Activated CD4-positive, alpha-beta T cell treated with anti-CD3 and anti-CD28 coated beads, Interleukin-2, amount 10 ng/mL, durations not matched to agents 24 days and 14 days (primary cell): ENCODE measurements at regions of chr10 and their contacts with region 1.

Region 1: DNA sequence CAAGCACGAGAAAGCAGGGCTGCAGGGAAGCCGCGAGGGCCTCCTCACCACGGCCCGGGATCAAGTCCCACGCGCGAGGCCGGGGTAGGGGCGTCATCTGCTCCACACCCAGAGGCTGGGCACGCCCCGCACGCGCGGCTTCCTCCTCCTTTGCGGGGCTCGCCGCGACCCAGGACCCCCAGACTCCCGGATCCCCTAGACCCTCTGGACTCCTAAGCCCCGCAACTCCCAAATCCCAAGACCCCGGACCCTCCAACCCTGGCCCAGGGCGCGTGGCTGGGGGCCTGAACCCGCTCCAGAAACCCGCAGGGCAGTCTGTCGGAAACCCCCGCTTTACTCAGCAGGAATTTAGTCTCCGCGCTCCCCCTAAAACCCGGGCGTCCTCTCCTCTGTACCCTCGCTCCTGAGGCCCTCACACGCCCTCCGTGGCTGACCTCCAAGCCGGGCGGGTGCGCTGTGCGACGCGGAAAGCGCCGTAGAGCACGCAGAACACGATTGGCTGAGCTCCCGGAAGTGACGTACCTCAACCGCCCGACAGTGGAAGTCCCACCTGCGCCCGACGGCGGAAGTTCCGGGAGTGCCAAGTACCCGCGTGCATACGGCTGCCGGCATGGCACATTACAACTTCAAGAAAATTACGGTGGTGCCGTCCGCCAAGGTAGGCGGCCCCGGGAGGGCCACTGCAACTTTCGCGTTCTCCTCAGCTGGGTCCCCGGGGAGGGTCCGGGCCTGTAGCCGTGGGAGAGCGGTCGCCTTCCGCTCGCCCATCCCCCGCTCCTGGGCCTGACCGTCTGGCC is at the start of gene GTPBP4:
- DNase-seq: peak; percentile 99
- H3K4me3 Mint-ChIP-seq: peak within 1 kb of the TSS; percentile 97
- H3K27ac Mint-ChIP-seq: peak within 1 kb of the TSS; percentile 98
- H3K4me1 Mint-ChIP-seq: peaks cover 34% of the 10 kb centered on the region
- H3K27me3 Mint-ChIP-seq: no peaks in the 10 kb centered on the region
- total RNA-seq, gene GTPBP4: 187 and 194 TPM in 2 replicates

Region 2: DNA sequence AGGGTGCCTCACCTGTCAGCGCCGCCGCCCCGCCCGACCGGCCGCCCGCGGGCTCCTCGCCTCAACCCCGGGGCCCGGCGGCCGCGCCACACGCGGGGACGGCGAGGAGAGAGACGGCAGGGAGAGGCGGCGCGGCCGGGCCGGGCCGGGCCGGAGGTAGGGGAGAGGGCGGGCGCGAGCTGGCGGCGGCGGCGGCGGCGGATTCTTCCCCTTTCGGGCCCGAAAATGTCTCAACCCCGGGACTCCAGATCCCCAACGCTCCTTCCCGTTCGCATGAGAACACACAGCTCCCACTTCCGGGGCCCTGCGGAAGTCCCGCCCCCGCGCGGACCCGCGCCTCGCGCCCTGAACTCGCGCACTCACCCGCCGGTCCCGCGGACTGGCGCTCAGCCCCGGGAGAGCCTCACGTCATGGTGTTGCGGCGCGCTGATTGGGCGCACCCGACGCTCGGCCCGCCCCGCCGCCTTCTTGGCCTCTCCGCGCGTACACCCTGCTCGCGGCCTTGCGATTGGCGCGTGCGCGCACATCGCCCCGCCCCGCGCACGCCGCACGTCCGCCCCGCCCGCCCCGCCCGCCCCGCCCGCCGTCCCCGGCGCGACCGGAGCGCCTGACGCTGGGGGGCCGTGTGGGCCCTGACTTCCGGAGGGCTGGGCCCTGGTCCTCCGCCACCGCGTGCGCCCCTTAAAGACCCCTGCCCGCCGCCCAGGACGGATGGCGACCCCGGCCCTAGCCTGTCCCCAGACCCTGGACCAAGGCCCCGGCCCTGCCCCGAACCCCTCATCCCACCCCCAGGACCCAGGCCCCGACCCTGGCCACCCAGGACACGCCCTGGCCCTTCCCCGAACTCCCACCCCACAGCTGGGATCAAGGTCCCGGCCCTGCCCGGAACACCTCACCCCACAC is 56.4 kb before region 1 on chr10 and contains the start of gene LARP4B:
- intact Hi-C with region 1: loop called (anchors 1 kb)
- DNase-seq: peak; percentile 100
- H3K4me3 Mint-ChIP-seq: peak within 1 kb of the TSS; percentile 92
- H3K27ac Mint-ChIP-seq: peak within 1 kb of the TSS; percentile 96
- H3K4me1 Mint-ChIP-seq: peaks cover 30% of the 10 kb centered on the region
- H3K27me3 Mint-ChIP-seq: no peaks in the 10 kb centered on the region
- total RNA-seq, gene LARP4B: 167 and 169 TPM in 2 replicates

Region 3: GRCh38 chr10:944034-944831 is 43.8 kb before region 1 on chr10:
- intact Hi-C with region 1: loop called (anchors 1 kb)
- DNase-seq: peak; percentile 78
- H3K4me3 Mint-ChIP-seq: peak overlapping the region; percentile 50
- H3K27ac Mint-ChIP-seq: peak overlapping the region; percentile 64
- H3K4me1 Mint-ChIP-seq: peaks cover 26% of the 10 kb centered on the region
- H3K27me3 Mint-ChIP-seq: no peaks in the 10 kb centered on the region

Region 4: GRCh38 chr10:955127-955819 is 32.8 kb before region 1 on chr10:
- intact Hi-C with region 1: no loop called
- DNase-seq: no peak
- H3K4me3 Mint-ChIP-seq: no peak overlapping the region
- H3K27ac Mint-ChIP-seq: no peak overlapping the region
- H3K4me1 Mint-ChIP-seq: no peaks in the 10 kb centered on the region
- H3K27me3 Mint-ChIP-seq: peaks cover 8% of the 10 kb centered on the region

Region 5: GRCh38 chr10:1010703-1011102 is 22.6 kb after region 1 on chr10:
- intact Hi-C with region 1: loop called (anchors 1 kb)
- DNase-seq: no peak
- H3K4me3 Mint-ChIP-seq: peak overlapping the region; percentile 51
- H3K27ac Mint-ChIP-seq: peak overlapping the region; percentile 97
- H3K4me1 Mint-ChIP-seq: peaks cover 21% of the 10 kb centered on the region
- H3K27me3 Mint-ChIP-seq: no peaks in the 10 kb centered on the region

Region 6: GRCh38 chr10:1048732-1049424 is 60.8 kb after region 1 on chr10 and contains the start of gene IDI1:
- intact Hi-C with region 1: loop called (anchors 1 kb)
- DNase-seq: peak; percentile 99
- H3K4me3 Mint-ChIP-seq: peak within 1 kb of the TSS; percentile 95
- H3K27ac Mint-ChIP-seq: peak within 1 kb of the TSS; percentile 95
- H3K4me1 Mint-ChIP-seq: peaks cover 55% of the 10 kb centered on the region
- H3K27me3 Mint-ChIP-seq: no peaks in the 10 kb centered on the region
- total RNA-seq, gene IDI1: 74.6 and 75.5 TPM in 2 replicates

Region 7: DNA sequence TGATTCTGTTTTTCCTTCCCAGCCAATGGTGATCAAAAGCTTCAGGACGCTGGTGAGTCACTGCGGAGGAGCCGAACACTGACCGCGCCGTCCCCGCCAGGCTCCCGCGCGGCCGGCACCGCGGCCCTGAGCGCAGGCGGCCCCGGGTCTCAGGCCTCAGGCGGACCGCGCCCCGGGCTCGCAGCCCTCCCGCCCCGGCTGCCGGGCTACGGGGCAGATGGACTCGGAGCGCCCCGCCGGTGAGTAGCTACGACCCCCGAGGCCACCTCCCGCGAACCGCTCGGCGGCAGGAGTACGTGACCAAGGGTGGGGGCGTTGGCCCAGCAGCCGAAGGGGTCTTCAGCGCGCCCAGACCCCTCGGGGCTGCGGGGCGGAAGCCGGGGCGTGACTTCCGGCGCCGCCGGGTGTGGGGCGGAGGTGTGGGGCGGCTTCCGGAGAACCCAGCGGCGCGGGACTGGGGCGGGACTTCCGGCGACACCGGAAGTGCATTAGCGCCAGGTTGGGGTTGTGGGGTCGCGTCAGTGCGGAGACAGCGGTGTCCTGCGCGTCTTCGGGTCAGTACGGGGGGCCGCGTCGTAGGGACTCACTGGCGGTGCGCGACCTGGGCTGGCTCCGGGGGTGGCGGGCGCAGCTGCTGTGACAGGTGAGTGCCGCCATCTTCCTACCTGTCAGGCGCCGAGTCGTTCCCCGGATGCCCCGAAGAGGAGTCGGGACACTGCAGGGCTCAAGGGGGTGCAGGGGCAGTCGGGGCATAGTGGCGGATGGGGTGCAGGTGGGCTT is 68.4 kb after region 1 on chr10 and contains the start of gene WDR37:
- intact Hi-C with region 1: loop called (anchors 2 kb)
- DNase-seq: peak; percentile 97
- H3K4me3 Mint-ChIP-seq: peak within 1 kb of the TSS; percentile 92
- H3K27ac Mint-ChIP-seq: peak within 1 kb of the TSS; percentile 93
- H3K4me1 Mint-ChIP-seq: peaks cover 70% of the 10 kb centered on the region
- H3K27me3 Mint-ChIP-seq: no peaks in the 10 kb centered on the region
- total RNA-seq, gene WDR37: 17.4 and 18.1 TPM in 2 replicates